CD4-positive, alpha-beta memory T cell (primary cell): ENCODE measurements at regions of chr2 and their contacts with region 1.

Region 1: DNA sequence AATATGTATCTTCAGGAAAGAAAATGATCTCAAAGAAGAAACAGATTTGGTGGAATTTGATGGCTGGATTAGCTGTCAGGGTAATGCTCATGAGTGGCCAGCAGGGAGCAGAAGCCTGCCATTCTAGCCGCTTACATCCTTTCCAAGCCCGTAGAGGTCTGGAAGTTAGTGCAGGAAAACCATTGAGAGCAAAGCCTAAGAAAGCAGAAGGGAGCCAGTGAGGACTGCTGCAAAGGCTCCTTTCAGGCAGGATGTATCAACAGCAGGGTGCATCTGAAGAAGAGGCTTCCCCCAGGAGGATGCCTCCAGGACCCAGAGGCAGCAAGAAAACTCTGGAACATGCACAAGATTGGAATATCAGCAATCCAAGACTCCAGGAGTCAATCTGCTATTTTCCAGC is 22.9 kb upstream of the LBH start:
- DNase-seq: peak in 3 of 5 donors; percentile 35 to 48 (median 43)
- H3K4me3 ChIP-seq: no peak overlapping the region
- H3K4me3 Mint-ChIP-seq: peak overlapping the region in 6 of 8 donors; percentile 8 to 77 (median 54)
- H3K27ac ChIP-seq: no peak overlapping the region
- H3K27ac Mint-ChIP-seq: peak overlapping the region in 6 of 7 donors; percentile 20 to 88 (median 58)
- H3K4me1 ChIP-seq: peaks cover 23% of the 10 kb centered on the region
- H3K4me1 Mint-ChIP-seq: peaks cover 13 to 20% (median 16%) of the 10 kb centered on the region in 4 donors
- H3K27me3 ChIP-seq: no peaks in the 10 kb centered on the region
- H3K27me3 Mint-ChIP-seq: no peaks in the 10 kb centered on the region

Region 2: GRCh38 chr2:29990129-29990528 is 218.3 kb before region 1 on chr2:
- CTCF ChIA-PET with region 1: no interaction called
- POLR2A ChIA-PET with region 1: no interaction called
- intact Hi-C with region 1: no loop called
- DNase-seq: no peak
- H3K4me3 ChIP-seq: no peak overlapping the region
- H3K4me3 Mint-ChIP-seq: no peak overlapping the region
- H3K27ac ChIP-seq: no peak overlapping the region
- H3K27ac Mint-ChIP-seq: no peak overlapping the region
- H3K4me1 ChIP-seq: no peaks in the 10 kb centered on the region
- H3K4me1 Mint-ChIP-seq: no peaks in the 10 kb centered on the region
- H3K27me3 ChIP-seq: no peaks in the 10 kb centered on the region
- H3K27me3 Mint-ChIP-seq: peaks cover 12 to 16% of the 10 kb centered on the region in 2 donors

Region 3: GRCh38 chr2:30146438-30147147 is 61.9 kb before region 1 on chr2 and contains the start of gene YPEL5:
- CTCF ChIA-PET with region 1: interaction called, 7 read pairs
- POLR2A ChIA-PET with region 1: interaction called, 11 read pairs
- intact Hi-C with region 1: no loop called
- DNase-seq: peak; percentile 99 to 100 (median 100)
- H3K4me3 ChIP-seq: peak within 1 kb of the TSS; percentile 49 to 78
- H3K4me3 Mint-ChIP-seq: peak within 1 kb of the TSS; percentile 86 to 94 (median 88)
- H3K27ac ChIP-seq: peak within 1 kb of the TSS; percentile 99
- H3K27ac Mint-ChIP-seq: peak within 1 kb of the TSS; percentile 98 to 100 (median 100)
- H3K4me1 ChIP-seq: peaks cover 54% of the 10 kb centered on the region
- H3K4me1 Mint-ChIP-seq: peaks cover 36 to 73% (median 43%) of the 10 kb centered on the region in 4 donors
- H3K27me3 ChIP-seq: no peaks in the 10 kb centered on the region
- H3K27me3 Mint-ChIP-seq: no peaks in the 10 kb centered on the region
- total RNA-seq, gene YPEL5: 81.5 to 88.4 TPM

Region 4: GRCh38 chr2:30231212-30231995 is 23.0 kb after region 1 on chr2 and contains the start of gene LBH:
- CTCF ChIA-PET with region 1: interaction called, 296 read pairs
- POLR2A ChIA-PET with region 1: interaction called, 226 read pairs
- intact Hi-C with region 1: loop called (anchors 1 kb)
- DNase-seq: peak; percentile 88 to 91 (median 89)
- H3K4me3 ChIP-seq: peak within 1 kb of the TSS; percentile 63 to 92
- H3K4me3 Mint-ChIP-seq: peak within 1 kb of the TSS; percentile 89 to 99 (median 96)
- H3K27ac ChIP-seq: peak within 1 kb of the TSS; percentile 93
- H3K27ac Mint-ChIP-seq: peak within 1 kb of the TSS; percentile 87 to 97 (median 91)
- H3K4me1 ChIP-seq: peaks cover 64% of the 10 kb centered on the region
- H3K4me1 Mint-ChIP-seq: peaks cover 36 to 76% (median 55%) of the 10 kb centered on the region in 4 donors
- H3K27me3 ChIP-seq: no peaks in the 10 kb centered on the region
- H3K27me3 Mint-ChIP-seq: no peaks in the 10 kb centered on the region
- total RNA-seq, gene LBH: 335 to 364 TPM

Region 5: DNA sequence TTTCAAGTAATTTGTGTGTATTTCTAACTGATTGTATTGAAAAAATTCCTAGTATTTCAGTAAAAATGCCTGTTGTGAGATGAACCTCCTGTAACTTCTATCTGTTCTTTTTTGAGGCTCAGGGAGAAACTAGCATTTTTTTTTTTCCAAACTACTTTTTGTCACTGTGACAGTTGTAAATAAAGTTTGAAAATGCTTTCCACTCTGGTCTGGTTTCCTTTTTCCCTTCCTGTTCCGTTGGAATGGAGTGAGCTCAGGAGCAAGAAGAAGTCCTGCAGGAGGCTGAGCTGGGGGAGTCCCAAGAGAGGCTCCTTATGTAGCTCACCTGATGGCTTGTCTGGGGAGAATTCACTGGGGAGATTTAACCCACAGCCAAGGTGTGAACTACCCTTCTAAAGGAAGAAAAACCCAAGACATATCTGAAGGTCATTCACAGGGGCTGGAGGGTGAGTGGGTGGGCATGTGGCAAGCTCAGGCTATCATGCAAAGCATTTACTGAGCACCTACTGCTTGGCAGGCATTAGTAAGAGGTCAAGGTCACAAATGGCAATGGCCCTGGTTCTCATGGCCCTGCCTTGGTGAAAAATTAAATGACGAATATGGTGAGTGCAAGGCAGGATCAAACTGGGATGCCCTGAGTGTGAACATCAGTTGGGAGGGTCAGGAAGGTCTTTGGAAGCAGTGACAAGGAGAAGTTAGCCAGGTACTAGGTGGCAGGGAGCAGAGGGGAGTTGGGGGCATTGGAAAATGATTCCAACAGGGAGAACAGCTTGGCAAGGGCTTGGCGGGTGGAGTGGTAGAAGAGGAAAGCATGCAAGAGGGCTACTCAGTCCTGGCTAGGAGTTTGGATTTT is 51.6 kb after region 1 on chr2:
- CTCF ChIA-PET with region 1: interaction called, 11 read pairs
- POLR2A ChIA-PET with region 1: interaction called, 3 read pairs
- intact Hi-C with region 1: no loop called
- DNase-seq: no peak
- H3K4me3 ChIP-seq: no peak overlapping the region
- H3K4me3 Mint-ChIP-seq: peak overlapping the region in 5 of 8 donors; percentile 8 to 53 (median 32)
- H3K27ac ChIP-seq: no peak overlapping the region
- H3K27ac Mint-ChIP-seq: peak overlapping the region; percentile 79 to 97 (median 90)
- H3K4me1 ChIP-seq: peaks cover 88% of the 10 kb centered on the region
- H3K4me1 Mint-ChIP-seq: peaks cover 61 to 95% (median 78%) of the 10 kb centered on the region in 4 donors
- H3K27me3 ChIP-seq: no peaks in the 10 kb centered on the region
- H3K27me3 Mint-ChIP-seq: no peaks in the 10 kb centered on the region

Region 6: DNA sequence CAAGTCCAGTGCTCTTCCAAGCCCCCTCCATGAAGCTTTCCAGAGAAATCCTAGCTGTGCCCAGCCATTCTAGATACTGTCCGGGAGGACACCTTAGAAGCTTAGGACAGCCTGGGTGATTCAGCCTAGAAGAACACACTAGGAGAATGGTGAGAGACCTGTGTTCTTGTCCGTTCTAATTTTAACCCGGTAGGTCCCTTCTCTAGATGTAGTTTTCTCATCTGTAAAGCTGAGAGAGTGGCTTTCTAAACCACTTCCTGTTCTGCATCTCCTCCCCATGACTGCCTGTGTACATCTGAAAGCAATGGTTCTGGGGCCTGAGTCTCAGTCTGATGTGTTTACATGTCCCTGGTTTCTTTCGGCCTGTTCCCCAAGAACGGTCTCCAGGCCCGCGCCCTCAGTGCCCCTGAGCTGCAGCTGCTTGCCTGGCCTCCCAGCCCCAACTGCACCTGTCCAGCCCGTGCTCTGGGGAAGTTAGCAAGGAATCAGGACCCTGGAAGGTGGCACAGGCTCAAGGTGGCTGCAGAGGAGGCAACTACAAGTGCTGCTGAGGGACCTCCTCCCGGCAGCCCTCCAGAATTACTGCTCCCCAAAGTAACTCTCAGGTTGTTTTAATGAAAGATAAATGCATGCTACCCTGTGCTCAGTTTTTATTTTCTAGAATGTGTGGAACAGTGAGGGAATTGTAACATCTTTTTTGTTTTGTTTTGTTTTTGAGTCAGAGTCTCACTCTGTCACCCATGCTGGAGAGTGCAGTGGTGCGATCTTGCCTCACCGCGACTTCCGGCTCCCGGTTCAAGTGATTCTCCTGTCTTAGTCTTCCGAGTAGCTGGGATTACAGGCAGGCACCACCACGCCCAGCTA is 128.8 kb after region 1 on chr2:
- CTCF ChIA-PET with region 1: interaction called, 85 read pairs
- POLR2A ChIA-PET with region 1: interaction called, 17 read pairs
- intact Hi-C with region 1: loop called (anchors 1 kb)
- DNase-seq: peak; percentile 58 to 66 (median 64)
- H3K4me3 ChIP-seq: peak overlapping the region; percentile 10 to 61
- H3K4me3 Mint-ChIP-seq: peak overlapping the region; percentile 76 to 89 (median 82)
- H3K27ac ChIP-seq: peak overlapping the region; percentile 58
- H3K27ac Mint-ChIP-seq: peak overlapping the region; percentile 94 to 97 (median 96)
- H3K4me1 ChIP-seq: peaks cover 72% of the 10 kb centered on the region
- H3K4me1 Mint-ChIP-seq: peaks cover 63 to 74% (median 70%) of the 10 kb centered on the region in 4 donors
- H3K27me3 ChIP-seq: no peaks in the 10 kb centered on the region
- H3K27me3 Mint-ChIP-seq: no peaks in the 10 kb centered on the region

Region 7: DNA sequence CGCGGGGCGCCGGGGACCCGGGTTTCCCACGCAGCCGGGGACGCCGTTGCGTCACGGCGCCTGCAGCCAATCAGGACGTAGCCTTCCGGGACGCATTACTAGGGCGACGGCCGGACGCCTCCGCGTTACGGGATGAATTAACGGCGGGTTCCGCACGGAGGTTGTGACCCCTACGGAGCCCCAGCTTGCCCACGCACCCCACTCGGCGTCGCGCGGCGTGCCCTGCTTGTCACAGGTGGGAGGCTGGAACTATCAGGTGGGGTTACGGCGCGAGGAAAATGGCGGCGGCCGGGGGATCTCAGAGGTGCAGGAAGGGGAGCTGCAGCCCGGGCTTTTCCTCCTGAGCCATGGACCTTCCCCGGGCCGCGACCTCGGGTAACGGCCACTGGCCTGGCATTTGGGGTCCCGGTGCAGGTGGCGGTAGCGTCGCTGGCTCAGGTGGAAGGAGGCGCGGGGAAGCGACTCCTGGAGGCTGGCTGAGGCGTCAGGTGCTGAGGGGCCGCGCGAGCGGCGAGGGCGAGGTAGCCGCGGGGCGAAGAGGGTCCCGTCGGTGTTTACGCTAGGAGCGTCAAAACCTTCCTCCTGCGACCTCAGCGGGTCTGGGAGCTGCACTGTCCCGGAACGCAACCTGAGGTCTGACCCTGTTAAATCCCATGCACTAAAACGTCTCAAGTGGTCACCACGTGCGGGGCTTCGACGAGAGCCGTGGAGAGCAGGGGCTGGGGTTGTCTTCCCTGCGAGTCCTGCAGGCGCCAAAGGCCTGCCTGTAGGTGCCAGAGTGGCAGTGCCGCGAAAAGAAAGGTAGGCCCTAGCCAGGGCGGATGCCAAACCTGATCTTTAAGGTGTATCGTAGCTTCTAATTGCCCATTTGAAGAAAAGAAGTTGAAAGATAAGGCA is 238.9 kb after region 1 on chr2 and contains the start of gene LCLAT1:
- CTCF ChIA-PET with region 1: interaction called, 19 read pairs
- POLR2A ChIA-PET with region 1: interaction called, 8 read pairs
- intact Hi-C with region 1: loop called (anchors 1 kb)
- DNase-seq: peak; percentile 87 to 88 (median 88)
- H3K4me3 ChIP-seq: peak within 1 kb of the TSS; percentile 48 to 96
- H3K4me3 Mint-ChIP-seq: peak within 1 kb of the TSS; percentile 95 to 99 (median 96)
- H3K27ac ChIP-seq: peak within 1 kb of the TSS; percentile 83
- H3K27ac Mint-ChIP-seq: peak within 1 kb of the TSS; percentile 89 to 99 (median 98)
- H3K4me1 ChIP-seq: peaks cover 27% of the 10 kb centered on the region
- H3K4me1 Mint-ChIP-seq: peaks cover 23 to 40% (median 30%) of the 10 kb centered on the region in 4 donors
- H3K27me3 ChIP-seq: no peaks in the 10 kb centered on the region
- H3K27me3 Mint-ChIP-seq: peaks cover 0 to 1% of the 10 kb centered on the region in 2 donors
- total RNA-seq, gene LCLAT1: 11.5 to 14.1 TPM

Region 8: GRCh38 chr2:30503007-30503694 is 294.7 kb after region 1 on chr2:
- CTCF ChIA-PET with region 1: interaction called, 10 read pairs
- POLR2A ChIA-PET with region 1: no interaction called
- intact Hi-C with region 1: no loop called
- DNase-seq: peak in 4 of 5 donors; percentile 32 to 53 (median 44)
- H3K4me3 ChIP-seq: no peak overlapping the region
- H3K4me3 Mint-ChIP-seq: peak overlapping the region in 6 of 8 donors; percentile 53 to 72 (median 62)
- H3K27ac ChIP-seq: no peak overlapping the region
- H3K27ac Mint-ChIP-seq: peak overlapping the region; percentile 58 to 90 (median 82)
- H3K4me1 ChIP-seq: peaks cover 39% of the 10 kb centered on the region
- H3K4me1 Mint-ChIP-seq: peaks cover 33 to 40% (median 35%) of the 10 kb centered on the region in 4 donors
- H3K27me3 ChIP-seq: no peaks in the 10 kb centered on the region
- H3K27me3 Mint-ChIP-seq: no peaks in the 10 kb centered on the region

Region 9: DNA sequence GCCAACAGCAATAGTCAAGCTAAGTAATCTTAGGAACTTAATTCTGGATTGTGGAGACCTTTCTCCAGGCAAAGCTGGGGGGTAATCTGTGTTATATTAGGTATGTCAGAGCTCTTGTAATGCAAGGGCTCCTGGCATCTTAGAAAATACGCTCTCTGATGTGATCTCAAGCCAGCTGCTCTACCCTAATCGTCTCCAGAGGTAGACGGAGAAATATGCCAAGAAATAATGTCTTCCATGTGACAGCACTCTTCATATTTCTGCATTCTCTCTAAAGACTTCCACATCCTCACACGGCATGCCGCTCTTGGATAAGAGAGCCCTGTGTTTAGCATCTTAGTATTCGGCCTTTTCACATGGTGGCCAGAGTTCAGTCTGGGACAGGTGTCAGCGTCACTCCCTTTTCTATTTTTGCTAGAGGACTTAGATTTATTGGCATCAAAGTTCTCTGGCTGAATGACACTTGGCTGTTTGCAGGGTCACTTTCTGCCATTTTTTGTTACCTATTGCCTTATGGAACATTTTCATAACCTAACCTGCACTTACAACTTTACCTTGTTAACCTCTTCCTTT is 573.6 kb after region 1 on chr2:
- CTCF ChIA-PET with region 1: no interaction called
- POLR2A ChIA-PET with region 1: no interaction called
- intact Hi-C with region 1: no loop called
- DNase-seq: no peak
- H3K4me3 ChIP-seq: no peak overlapping the region
- H3K4me3 Mint-ChIP-seq: no peak overlapping the region
- H3K27ac ChIP-seq: no peak overlapping the region
- H3K27ac Mint-ChIP-seq: no peak overlapping the region
- H3K4me1 ChIP-seq: no peaks in the 10 kb centered on the region
- H3K4me1 Mint-ChIP-seq: no peaks in the 10 kb centered on the region
- H3K27me3 ChIP-seq: no peaks in the 10 kb centered on the region
- H3K27me3 Mint-ChIP-seq: peaks cover 11 to 23% of the 10 kb centered on the region in 2 donors

Region 10: DNA sequence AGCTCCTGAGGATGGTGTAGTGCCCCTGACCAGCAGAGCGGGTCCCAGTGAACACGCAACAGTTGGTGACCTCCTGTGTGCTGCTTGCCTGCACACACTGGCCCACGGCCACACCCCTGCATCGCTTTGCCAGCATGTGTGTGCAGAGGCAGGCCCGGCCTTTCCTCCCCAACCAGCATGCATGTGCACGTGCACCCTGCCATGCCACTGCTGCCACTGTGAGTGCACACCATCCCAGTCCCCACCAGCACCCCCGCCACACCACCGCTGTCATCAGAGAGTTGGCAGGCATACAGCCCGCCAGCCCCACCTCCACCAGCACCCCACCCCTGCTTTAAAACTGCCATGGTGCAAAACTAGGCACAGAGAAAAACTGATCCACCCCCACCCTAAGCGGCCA is 1569.7 kb after region 1 on chr2:
- CTCF ChIA-PET with region 1: no interaction called
- POLR2A ChIA-PET with region 1: no interaction called
- intact Hi-C with region 1: no loop called
- DNase-seq: no peak
- H3K4me3 ChIP-seq: no peak overlapping the region
- H3K4me3 Mint-ChIP-seq: no peak overlapping the region
- H3K27ac ChIP-seq: no peak overlapping the region
- H3K27ac Mint-ChIP-seq: no peak overlapping the region
- H3K4me1 ChIP-seq: no peaks in the 10 kb centered on the region
- H3K4me1 Mint-ChIP-seq: no peaks in the 10 kb centered on the region
- H3K27me3 ChIP-seq: no peaks in the 10 kb centered on the region
- H3K27me3 Mint-ChIP-seq: peaks cover 4 to 19% of the 10 kb centered on the region in 2 donors